CD14-positive monocyte (primary cell): ENCODE measurements at regions of chr10 and their contacts with region 1.

Region 1: GRCh38 chr10:50417886-50418830 is 166.8 kb upstream of the ASAH2 start:
- DNase-seq: peak; percentile 79 to 87 (median 86)
- H3K4me3 ChIP-seq: peak overlapping the region; percentile 87 to 98 (median 96)
- H3K4me3 Mint-ChIP-seq: peak overlapping the region; percentile 90 to 93
- H3K27ac ChIP-seq: peak overlapping the region; percentile 76 to 99
- H3K27ac Mint-ChIP-seq: peak overlapping the region; percentile 91 to 98 (median 94)
- H3K4me1 ChIP-seq: peaks cover 49 to 67% of the 10 kb centered on the region in 2 donors
- H3K4me1 Mint-ChIP-seq: peaks cover 66% of the 10 kb centered on the region
- H3K27me3 ChIP-seq: no peaks in the 10 kb centered on the region
- H3K27me3 Mint-ChIP-seq: no peaks in the 10 kb centered on the region
- CTCF ChIP-seq: no peak

Region 2: GRCh38 chr10:50347394-50347802 is 70.8 kb before region 1 on chr10:
- intact Hi-C with region 1: no loop called
- DNase-seq: peak in 1 of 3 donors; percentile 33
- H3K4me3 ChIP-seq: no peak overlapping the region
- H3K4me3 Mint-ChIP-seq: no peak overlapping the region
- H3K27ac ChIP-seq: no peak overlapping the region
- H3K27ac Mint-ChIP-seq: peak overlapping the region in 3 of 7 donors; percentile 31 to 56 (median 51)
- H3K4me1 ChIP-seq: no peaks in the 10 kb centered on the region
- H3K4me1 Mint-ChIP-seq: peaks cover 17% of the 10 kb centered on the region
- H3K27me3 ChIP-seq: no peaks in the 10 kb centered on the region
- H3K27me3 Mint-ChIP-seq: no peaks in the 10 kb centered on the region
- CTCF ChIP-seq: no peak

Region 3: GRCh38 chr10:50367732-50368131 is 50.4 kb before region 1 on chr10:
- intact Hi-C with region 1: loop called (anchors 5 to 10 kb)
- DNase-seq: peak; percentile 12 to 49 (median 45)
- H3K4me3 ChIP-seq: no peak overlapping the region
- H3K4me3 Mint-ChIP-seq: no peak overlapping the region
- H3K27ac ChIP-seq: peak overlapping the region in 1 of 2 donors; percentile 24
- H3K27ac Mint-ChIP-seq: peak overlapping the region in 1 of 7 donors; percentile 47
- H3K4me1 ChIP-seq: peaks cover 6 to 8% of the 10 kb centered on the region in 2 donors
- H3K4me1 Mint-ChIP-seq: peaks cover 16% of the 10 kb centered on the region
- H3K27me3 ChIP-seq: no peaks in the 10 kb centered on the region
- H3K27me3 Mint-ChIP-seq: peaks cover 0 to 2% (median 0%) of the 10 kb centered on the region in 3 donors
- CTCF ChIP-seq: peak; percentile 49

Region 4: GRCh38 chr10:50375051-50375452 is 43.1 kb before region 1 on chr10:
- intact Hi-C with region 1: loop called in 1 of 2 experiments (anchors 10 kb)
- DNase-seq: peak; percentile 25 to 59 (median 52)
- H3K4me3 ChIP-seq: no peak overlapping the region
- H3K4me3 Mint-ChIP-seq: no peak overlapping the region
- H3K27ac ChIP-seq: peak overlapping the region in 1 of 2 donors; percentile 7
- H3K27ac Mint-ChIP-seq: no peak overlapping the region
- H3K4me1 ChIP-seq: peaks cover 10 to 24% of the 10 kb centered on the region in 2 donors
- H3K4me1 Mint-ChIP-seq: peaks cover 13% of the 10 kb centered on the region
- H3K27me3 ChIP-seq: no peaks in the 10 kb centered on the region
- H3K27me3 Mint-ChIP-seq: peaks cover 0 to 2% (median 0%) of the 10 kb centered on the region in 3 donors
- CTCF ChIP-seq: no peak

Region 5: DNA sequence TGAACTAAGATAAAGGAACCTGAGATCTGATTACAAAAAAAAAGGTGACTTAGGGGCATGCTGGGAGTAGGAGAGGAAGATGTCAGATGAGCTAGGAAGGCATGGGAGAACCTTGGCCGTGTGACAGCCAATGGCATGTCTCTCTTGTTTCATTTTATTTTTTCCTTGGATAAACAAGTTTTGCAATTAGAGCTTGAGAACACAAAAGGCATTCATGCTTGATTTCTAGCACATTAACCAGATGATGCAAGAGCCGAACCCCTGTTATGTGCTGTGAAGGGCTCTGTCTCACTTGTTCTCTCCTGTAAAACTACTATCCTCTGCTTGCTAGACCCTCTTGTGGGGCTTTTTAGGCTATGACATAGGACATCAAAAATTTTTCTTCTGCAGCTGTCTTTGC is 32.5 kb before region 1 on chr10:
- intact Hi-C with region 1: loop called in 1 of 2 experiments (anchors 5 kb)
- DNase-seq: no peak
- H3K4me3 ChIP-seq: no peak overlapping the region
- H3K4me3 Mint-ChIP-seq: no peak overlapping the region
- H3K27ac ChIP-seq: no peak overlapping the region
- H3K27ac Mint-ChIP-seq: peak overlapping the region in 1 of 7 donors; percentile 41
- H3K4me1 ChIP-seq: peaks cover 8 to 25% of the 10 kb centered on the region in 2 donors
- H3K4me1 Mint-ChIP-seq: peaks cover 43% of the 10 kb centered on the region
- H3K27me3 ChIP-seq: no peaks in the 10 kb centered on the region
- H3K27me3 Mint-ChIP-seq: no peaks in the 10 kb centered on the region
- CTCF ChIP-seq: no peak

Region 6: DNA sequence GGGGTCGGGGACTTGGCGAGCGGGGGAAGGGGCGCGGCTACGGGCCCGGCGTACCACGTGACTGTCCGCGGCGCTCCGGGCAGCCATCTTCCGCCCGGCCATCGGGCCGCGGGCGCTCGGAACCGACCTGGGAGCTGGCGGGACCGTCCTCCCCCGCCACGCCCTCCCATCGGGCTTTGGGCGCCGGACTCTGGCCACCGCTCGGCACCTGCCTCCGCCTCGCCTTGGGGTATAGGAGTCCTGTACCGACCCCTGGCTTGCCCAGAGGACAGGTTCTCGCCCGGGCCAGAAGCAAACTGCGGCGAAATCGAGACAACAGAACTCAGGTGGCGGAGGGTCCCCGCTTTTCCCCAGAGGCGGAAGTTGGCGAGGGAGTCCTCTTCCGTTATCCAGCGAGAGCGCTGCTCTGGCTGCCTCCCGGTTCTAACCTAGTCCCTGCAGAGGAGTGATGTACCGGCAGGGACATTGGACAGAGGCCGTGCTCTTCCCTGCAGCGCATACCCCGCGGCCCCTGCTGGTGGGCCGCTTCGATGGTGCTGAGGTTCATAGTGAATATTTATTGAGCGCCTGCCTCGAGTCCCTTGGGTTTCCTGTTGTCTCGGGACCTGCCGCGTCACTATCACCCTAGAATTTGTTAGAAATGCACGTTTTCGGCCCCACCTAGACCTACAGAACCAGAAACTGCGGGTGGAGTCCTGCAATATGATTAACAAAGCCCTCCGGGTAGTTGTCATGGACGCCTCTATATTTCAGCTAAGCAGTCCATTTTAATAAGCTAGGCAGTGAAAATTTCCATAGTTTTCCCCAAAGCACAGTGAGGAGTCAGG is 206.9 kb after region 1 on chr10:
- intact Hi-C with region 1: loop called in 1 of 2 experiments (anchors 10 kb)
- DNase-seq: peak; percentile 65 to 82 (median 77)
- H3K4me3 ChIP-seq: peak overlapping the region; percentile 71 to 86 (median 77)
- H3K4me3 Mint-ChIP-seq: peak overlapping the region; percentile 88 to 93
- H3K27ac ChIP-seq: peak overlapping the region; percentile 98 to 100
- H3K27ac Mint-ChIP-seq: peak overlapping the region; percentile 91 to 99 (median 94)
- H3K4me1 ChIP-seq: peaks cover 19 to 28% of the 10 kb centered on the region in 2 donors
- H3K4me1 Mint-ChIP-seq: peaks cover 26% of the 10 kb centered on the region
- H3K27me3 ChIP-seq: no peaks in the 10 kb centered on the region
- H3K27me3 Mint-ChIP-seq: peaks cover 0 to 2% (median 0%) of the 10 kb centered on the region in 3 donors
- CTCF ChIP-seq: peak; percentile 48